Activated CD4-positive, alpha-beta T cell treated with anti-CD3 and anti-CD28 coated beads for 36 hours (primary cell): ENCODE measurements at regions of chr15 and their contacts with region 1.

Region 1: GRCh38 chr15:99565299-99566156 is at the start of gene MEF2A:
- DNase-seq: peak; percentile 95
- ATAC-seq: peak; percentile 84
- H3K4me3 Mint-ChIP-seq: peak within 1 kb of the TSS; percentile 98
- H3K27ac Mint-ChIP-seq: peak within 1 kb of the TSS; percentile 96
- H3K4me1 Mint-ChIP-seq: peaks cover 21% of the 10 kb centered on the region
- H3K27me3 Mint-ChIP-seq: no peaks in the 10 kb centered on the region
- total RNA-seq, gene MEF2A: 16.5 to 20.9 TPM

Region 2: GRCh38 chr15:98865397-98866339 is 699.9 kb before region 1 on chr15:
- CTCF ChIA-PET with region 1: no interaction called
- POLR2A ChIA-PET with region 1: no interaction called
- intact Hi-C with region 1: loop called in 1 of 2 experiments (anchors 5 kb)
- DNase-seq: peak; percentile 87
- ATAC-seq: peak; percentile 95
- H3K4me3 Mint-ChIP-seq: peak overlapping the region; percentile 82
- H3K27ac Mint-ChIP-seq: peak overlapping the region; percentile 92
- H3K4me1 Mint-ChIP-seq: peaks cover 42% of the 10 kb centered on the region
- H3K27me3 Mint-ChIP-seq: no peaks in the 10 kb centered on the region

Region 3: DNA sequence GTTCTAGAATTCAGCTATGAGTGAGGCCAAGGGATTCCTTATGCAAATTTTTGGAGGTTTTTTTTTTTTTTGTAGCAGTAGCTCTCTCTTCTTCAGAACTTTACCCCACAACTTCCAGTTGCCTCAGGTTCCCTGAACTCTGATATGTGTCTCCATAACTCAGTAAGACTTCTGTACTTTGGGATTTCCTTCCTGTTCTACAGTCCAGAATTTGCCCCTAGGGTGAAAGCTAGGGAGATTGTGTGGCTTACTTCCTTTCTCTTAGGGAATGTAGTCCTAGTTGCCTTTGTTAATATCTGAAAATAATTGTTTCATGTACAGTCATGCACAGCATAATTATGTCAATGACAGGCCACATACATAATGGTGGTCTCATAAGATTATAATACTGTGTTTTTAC is 283.4 kb before region 1 on chr15:
- CTCF ChIA-PET with region 1: interaction called, 3 read pairs
- POLR2A ChIA-PET with region 1: no interaction called
- intact Hi-C with region 1: loop called in 1 of 2 experiments (anchors 5 kb)
- DNase-seq: no peak
- ATAC-seq: no peak
- H3K4me3 Mint-ChIP-seq: no peak overlapping the region
- H3K27ac Mint-ChIP-seq: no peak overlapping the region
- H3K4me1 Mint-ChIP-seq: peaks cover 44% of the 10 kb centered on the region
- H3K27me3 Mint-ChIP-seq: no peaks in the 10 kb centered on the region

Region 4: GRCh38 chr15:99424978-99425656 is 140.4 kb before region 1 on chr15:
- CTCF ChIA-PET with region 1: no interaction called
- POLR2A ChIA-PET with region 1: no interaction called
- intact Hi-C with region 1: loop called (anchors 1 to 10 kb)
- DNase-seq: peak; percentile 79
- ATAC-seq: peak; percentile 99
- H3K4me3 Mint-ChIP-seq: peak overlapping the region; percentile 35
- H3K27ac Mint-ChIP-seq: peak overlapping the region; percentile 90
- H3K4me1 Mint-ChIP-seq: peaks cover 62% of the 10 kb centered on the region
- H3K27me3 Mint-ChIP-seq: peaks cover 2% of the 10 kb centered on the region

Region 5: DNA sequence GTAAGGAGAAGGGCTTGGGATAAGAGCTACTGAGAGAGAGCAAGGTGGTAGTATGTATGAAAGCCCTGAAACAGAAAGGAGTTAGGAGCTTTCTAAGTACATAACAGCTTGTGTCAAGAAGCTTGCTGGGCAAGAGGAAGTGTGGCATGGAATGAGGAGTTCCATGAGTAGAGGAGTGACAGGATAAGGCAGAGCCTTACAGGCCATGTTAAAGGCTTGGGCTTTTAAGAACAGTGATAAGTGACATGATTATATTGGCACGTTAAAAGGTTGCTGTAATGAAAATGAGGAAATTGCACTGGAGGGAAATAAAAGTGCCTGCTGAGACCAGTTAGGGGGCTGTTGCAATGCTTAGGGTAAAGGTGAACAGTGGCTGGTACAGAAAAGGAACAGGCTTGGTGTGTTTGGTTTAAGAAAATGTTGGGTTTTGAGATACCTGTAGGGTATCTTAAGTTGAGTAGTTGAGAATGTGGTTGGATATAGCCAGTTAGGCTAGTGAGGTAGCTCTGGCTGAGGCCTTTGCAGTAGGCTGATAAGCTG is 49.3 kb after region 1 on chr15:
- CTCF ChIA-PET with region 1: no interaction called
- POLR2A ChIA-PET with region 1: interaction called, 5 read pairs
- intact Hi-C with region 1: loop called in 1 of 2 experiments (anchors 5 kb)
- DNase-seq: no peak
- ATAC-seq: no peak
- H3K4me3 Mint-ChIP-seq: no peak overlapping the region
- H3K27ac Mint-ChIP-seq: peak overlapping the region; percentile 19
- H3K4me1 Mint-ChIP-seq: peaks cover 57% of the 10 kb centered on the region
- H3K27me3 Mint-ChIP-seq: no peaks in the 10 kb centered on the region

Region 6: GRCh38 chr15:100349696-100350433 is 784.3 kb after region 1 on chr15:
- CTCF ChIA-PET with region 1: no interaction called
- POLR2A ChIA-PET with region 1: no interaction called
- intact Hi-C with region 1: loop called in 1 of 2 experiments (anchors 10 kb)
- DNase-seq: peak; percentile 93
- ATAC-seq: peak; percentile 95
- H3K4me3 Mint-ChIP-seq: peak overlapping the region; percentile 78
- H3K27ac Mint-ChIP-seq: peak overlapping the region; percentile 77
- H3K4me1 Mint-ChIP-seq: peaks cover 7% of the 10 kb centered on the region
- H3K27me3 Mint-ChIP-seq: peaks cover 7% of the 10 kb centered on the region